Activated naive CD4-positive, alpha-beta T cell treated with anti-CD3 and anti-CD28 coated beads, Interleukin-2, amount 10 ng/mL, durations not matched to agents 7 days and 5 days (primary cell): ENCODE measurements at regions of chr6 and their contacts with region 1.

Region 1: GRCh38 chr6:145734486-145735355 is 599 bp downstream of the EPM2A start:
- DNase-seq: peak; percentile 75
- H3K4me3 Mint-ChIP-seq: peak overlapping the region; percentile 97
- H3K27ac Mint-ChIP-seq: peak overlapping the region; percentile 96
- H3K4me1 Mint-ChIP-seq: peaks cover 19% of the 10 kb centered on the region
- H3K27me3 Mint-ChIP-seq: no peaks in the 10 kb centered on the region

Region 2: GRCh38 chr6:145814501-145815308 is 80.0 kb after region 1 on chr6 and contains the start of gene FBXO30:
- CTCF ChIA-PET with region 1: interaction called, 13 read pairs
- DNase-seq: peak; percentile 88
- H3K4me3 Mint-ChIP-seq: peak within 1 kb of the TSS; percentile 92
- H3K27ac Mint-ChIP-seq: peak within 1 kb of the TSS; percentile 94
- H3K4me1 Mint-ChIP-seq: peaks cover 28% of the 10 kb centered on the region
- H3K27me3 Mint-ChIP-seq: no peaks in the 10 kb centered on the region